ENCODE measurements at regions of chr14 and their contacts with region 1.

Region 1: DNA sequence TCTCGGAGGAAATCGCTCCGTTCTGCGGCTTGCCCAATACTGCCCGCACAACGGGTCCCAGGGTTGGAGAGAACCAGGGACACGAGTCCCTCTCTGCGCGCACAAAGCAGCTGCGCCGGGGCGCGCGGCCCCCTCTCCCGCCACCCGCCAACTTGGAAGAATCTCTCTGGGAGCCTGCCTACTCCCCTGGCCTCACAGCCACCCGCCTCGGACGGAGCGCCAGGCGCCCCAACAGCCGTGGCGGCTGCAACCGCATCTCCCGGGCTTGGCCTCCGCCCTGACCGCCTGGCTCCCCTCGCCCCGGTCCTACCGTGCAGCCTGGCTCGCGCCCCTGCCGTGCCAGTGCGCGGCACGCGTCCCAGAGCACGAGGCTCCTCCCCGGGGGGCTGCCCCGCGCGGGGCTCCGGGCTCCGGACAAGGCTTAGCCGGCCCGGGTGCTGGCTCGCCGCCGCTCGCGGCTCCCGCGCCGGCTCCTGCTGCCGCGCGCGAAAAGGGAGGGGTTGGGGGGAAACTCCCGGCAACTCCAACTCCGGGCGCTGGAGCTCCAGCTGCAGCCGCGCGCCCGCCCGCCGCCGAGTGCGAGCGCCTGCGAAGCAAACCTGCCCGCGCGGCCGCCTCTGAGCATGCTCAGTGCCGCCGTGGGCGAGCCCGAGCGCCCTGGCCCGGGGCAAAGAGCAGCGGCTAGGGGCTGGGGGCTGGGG is at the start of gene STXBP6:
- DNase-seq: peak; percentile 76 to 87 (median 78)
- ATAC-seq: peak; percentile 87
- H3K4me3 ChIP-seq: peak within 1 kb of the TSS; percentile 53
- H3K4me1 ChIP-seq: peaks cover 30% of the 10 kb centered on the region
- CTCF ChIP-seq: no peak
- total RNA-seq, gene STXBP6: 10.9 to 25.9 (median 19.8) TPM

Region 2: DNA sequence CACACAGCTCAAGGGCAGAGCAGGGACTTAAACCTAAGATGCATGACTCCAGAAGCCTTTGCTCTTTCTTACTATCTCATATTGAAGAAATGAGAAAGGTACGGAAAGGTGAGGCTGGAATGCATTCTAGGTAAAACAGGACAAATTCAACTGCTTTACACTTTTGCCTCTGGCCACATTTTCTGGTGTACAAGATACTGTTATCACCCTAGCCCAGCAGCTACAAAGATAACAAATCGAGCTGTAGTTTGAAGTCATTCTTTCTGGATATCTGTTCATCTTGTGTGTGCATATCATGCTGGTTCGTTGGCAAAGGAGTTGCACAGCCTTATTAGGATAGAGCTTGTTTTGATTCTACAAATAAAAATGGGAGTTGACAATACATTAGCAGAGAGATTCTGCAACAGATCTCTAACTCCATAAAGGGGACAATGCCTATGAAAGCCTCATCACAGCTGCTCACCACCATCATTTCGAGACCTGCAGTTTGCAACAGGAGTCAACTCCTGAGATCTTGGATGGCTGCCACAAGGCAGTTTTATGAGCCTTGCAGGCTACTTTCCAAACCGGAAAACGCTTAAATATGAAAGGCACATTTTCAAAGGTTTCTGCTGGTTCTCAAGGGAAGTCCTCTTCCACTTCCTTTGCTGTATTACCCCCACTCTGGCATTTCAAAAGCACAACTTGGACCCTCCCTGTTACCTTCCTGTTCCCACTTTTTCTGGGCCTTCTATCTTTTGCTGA is 64.7 kb before region 1 on chr14:
- intact Hi-C with region 1: loop called in 1 of 2 experiments (anchors 10 kb)
- DNase-seq: peak in 2 of 3 donors; percentile 66 to 92
- ATAC-seq: peak; percentile 59
- H3K4me3 ChIP-seq: no peak overlapping the region
- H3K4me1 ChIP-seq: peaks cover 35% of the 10 kb centered on the region
- CTCF ChIP-seq: no peak

Region 3: DNA sequence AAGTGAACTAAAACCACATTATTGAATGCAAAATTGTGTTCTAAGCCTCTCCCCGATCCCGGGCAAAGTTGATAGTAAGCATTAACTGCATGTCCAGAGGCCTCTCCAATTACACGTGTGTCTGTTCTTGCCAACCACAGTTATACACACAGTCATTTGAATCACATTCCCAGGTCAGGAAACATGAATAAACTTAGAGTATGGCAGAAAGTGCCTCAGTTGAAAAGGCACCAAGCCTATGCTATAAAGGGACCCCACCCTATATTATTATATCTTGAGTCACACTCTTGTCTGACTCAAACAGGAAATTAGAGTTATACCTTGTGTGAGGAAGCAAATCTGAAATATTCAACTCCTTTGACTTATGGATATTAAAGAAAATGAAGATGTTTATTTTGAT is 128.5 kb after region 1 on chr14:
- intact Hi-C with region 1: no loop called
- DNase-seq: peak in 1 of 3 donors; percentile 27
- ATAC-seq: peak; percentile 97
- H3K4me3 ChIP-seq: no peak overlapping the region
- H3K4me1 ChIP-seq: peaks cover 7% of the 10 kb centered on the region
- CTCF ChIP-seq: no peak

Measured in mucosa of descending colon (tissue), 3 donors.